A673 (cell line): ENCODE measurements at regions of chr6 and their contacts with region 1.

Region 1: DNA sequence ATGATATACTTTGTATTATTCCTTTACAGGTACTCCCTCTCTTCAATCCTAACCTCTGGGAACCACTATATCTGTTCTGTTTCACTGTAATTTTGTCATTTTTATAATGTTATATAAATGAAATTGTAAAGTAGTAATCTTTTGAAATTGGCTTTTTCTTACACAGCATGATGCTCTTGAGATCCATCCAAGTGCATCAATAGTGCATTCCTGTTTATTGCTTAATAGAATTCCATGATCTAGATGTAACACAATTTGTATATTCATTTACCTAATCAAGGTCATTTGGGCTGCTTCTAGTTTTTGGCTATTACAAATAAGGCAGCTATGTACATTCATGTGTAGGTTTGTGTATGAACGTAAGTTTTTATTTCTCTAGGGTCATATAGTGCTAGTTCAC is 174.6 kb downstream of the KHDC1L start:
- DNase-seq: peak; percentile 60
- H3K4me3 ChIP-seq: no peak overlapping the region
- H3K27ac ChIP-seq: peak overlapping the region; percentile 77
- H3K4me1 ChIP-seq: peaks cover 33% of the 10 kb centered on the region
- H3K27me3 ChIP-seq: no peaks in the 10 kb centered on the region
- CTCF ChIP-seq: no peak

Region 2: GRCh38 chr6:72418495-72418894 is 632.2 kb before region 1 on chr6:
- CTCF ChIA-PET with region 1: no interaction called
- POLR2A ChIA-PET with region 1: no interaction called
- intact Hi-C with region 1: loop called (anchors 5 kb)
- DNase-seq: peak; percentile 64
- H3K4me3 ChIP-seq: no peak overlapping the region
- H3K27ac ChIP-seq: no peak overlapping the region
- H3K4me1 ChIP-seq: peaks cover 46% of the 10 kb centered on the region
- H3K27me3 ChIP-seq: no peaks in the 10 kb centered on the region
- CTCF ChIP-seq: no peak

Region 3: GRCh38 chr6:72643214-72643613 is 407.5 kb before region 1 on chr6:
- CTCF ChIA-PET with region 1: no interaction called
- POLR2A ChIA-PET with region 1: no interaction called
- intact Hi-C with region 1: loop called (anchors 5 kb)
- DNase-seq: peak; percentile 65
- H3K4me3 ChIP-seq: no peak overlapping the region
- H3K27ac ChIP-seq: no peak overlapping the region
- H3K4me1 ChIP-seq: peaks cover 31% of the 10 kb centered on the region
- H3K27me3 ChIP-seq: no peaks in the 10 kb centered on the region
- CTCF ChIP-seq: peak; percentile 51

Region 4: DNA sequence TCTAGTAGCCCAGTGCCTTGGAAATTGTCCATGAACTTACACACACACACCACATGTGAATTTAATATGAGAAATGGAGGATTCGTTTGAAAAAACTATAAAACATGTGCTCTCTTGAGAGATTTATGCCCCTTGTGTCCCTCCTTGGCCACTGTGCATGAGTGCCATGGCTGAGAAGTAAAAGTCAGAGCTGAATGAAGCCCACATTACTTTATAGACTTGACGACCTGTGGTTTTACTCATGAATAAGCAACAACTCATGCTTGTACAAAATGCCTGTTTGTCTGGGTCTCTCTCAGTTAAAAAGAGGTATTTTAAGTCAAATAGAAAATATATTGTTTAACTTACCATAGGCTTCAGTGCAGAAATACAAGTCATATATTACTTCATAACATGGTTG is 326.2 kb before region 1 on chr6:
- CTCF ChIA-PET with region 1: no interaction called
- POLR2A ChIA-PET with region 1: no interaction called
- intact Hi-C with region 1: no loop called
- DNase-seq: no peak
- H3K4me3 ChIP-seq: no peak overlapping the region
- H3K27ac ChIP-seq: no peak overlapping the region
- H3K4me1 ChIP-seq: peaks cover 6% of the 10 kb centered on the region
- H3K27me3 ChIP-seq: no peaks in the 10 kb centered on the region
- CTCF ChIP-seq: no peak

Region 5: DNA sequence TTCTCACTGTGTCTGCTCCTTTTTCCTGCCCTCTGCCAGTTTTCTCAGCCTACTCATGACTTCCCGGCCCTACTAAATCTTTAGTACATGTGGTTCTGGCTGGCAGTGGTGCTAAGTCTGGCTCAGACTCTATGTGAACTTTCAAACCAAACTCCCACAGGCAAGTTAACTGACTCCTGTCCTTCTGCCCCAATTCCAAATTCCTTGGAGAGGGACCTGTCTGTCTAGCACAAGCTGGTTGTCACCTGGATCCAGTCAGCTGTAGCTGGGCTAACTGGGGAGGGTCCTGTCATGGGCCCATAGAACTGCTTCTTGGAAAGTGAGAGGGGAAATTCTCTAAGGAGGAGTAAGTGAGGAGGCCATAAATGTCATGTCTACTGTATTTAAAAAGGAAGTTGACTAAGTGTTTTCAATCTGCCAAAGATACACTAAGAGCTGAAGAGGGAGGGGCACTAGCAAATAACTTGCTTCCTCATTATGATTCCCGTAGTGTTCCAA is 188.7 kb before region 1 on chr6:
- CTCF ChIA-PET with region 1: no interaction called
- POLR2A ChIA-PET with region 1: no interaction called
- intact Hi-C with region 1: no loop called
- DNase-seq: peak; percentile 80
- H3K4me3 ChIP-seq: no peak overlapping the region
- H3K27ac ChIP-seq: peak overlapping the region; percentile 12
- H3K4me1 ChIP-seq: peaks cover 51% of the 10 kb centered on the region
- H3K27me3 ChIP-seq: no peaks in the 10 kb centered on the region
- CTCF ChIP-seq: no peak

Region 6: GRCh38 chr6:72950114-72950860 is 100.4 kb before region 1 on chr6:
- CTCF ChIA-PET with region 1: no interaction called
- POLR2A ChIA-PET with region 1: no interaction called
- intact Hi-C with region 1: loop called (anchors 5 kb)
- DNase-seq: peak; percentile 83
- H3K4me3 ChIP-seq: no peak overlapping the region
- H3K27ac ChIP-seq: peak overlapping the region; percentile 72
- H3K4me1 ChIP-seq: peaks cover 55% of the 10 kb centered on the region
- H3K27me3 ChIP-seq: no peaks in the 10 kb centered on the region
- CTCF ChIP-seq: no peak

Region 7: DNA sequence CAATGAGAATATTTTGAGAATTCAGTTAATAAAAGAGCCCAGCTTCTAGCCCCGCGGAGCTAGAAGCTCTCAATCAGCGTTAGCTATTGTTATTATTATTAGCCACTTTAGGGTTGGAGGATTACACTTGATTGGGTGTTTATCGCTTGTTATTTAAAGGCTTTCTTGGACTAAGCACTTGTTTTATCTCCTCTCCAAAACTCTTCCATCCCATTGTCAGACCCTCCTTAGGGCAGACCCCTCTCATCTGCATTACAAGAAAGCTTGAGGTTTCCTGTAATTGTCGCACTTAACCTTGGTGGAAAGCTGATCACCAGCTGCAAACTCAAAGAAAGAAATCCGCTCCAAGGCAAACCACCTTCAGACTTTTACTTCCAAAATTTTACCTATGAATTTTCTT is 298.6 kb after region 1 on chr6:
- CTCF ChIA-PET with region 1: no interaction called
- POLR2A ChIA-PET with region 1: no interaction called
- intact Hi-C with region 1: no loop called
- DNase-seq: no peak
- H3K4me3 ChIP-seq: no peak overlapping the region
- H3K27ac ChIP-seq: no peak overlapping the region
- H3K4me1 ChIP-seq: no peaks in the 10 kb centered on the region
- H3K27me3 ChIP-seq: no peaks in the 10 kb centered on the region
- CTCF ChIP-seq: no peak